ENCODE measurements at regions of chr13 and their contacts with region 1.

Region 1: GRCh38 chr13:60627071-60627686 is 230.2 kb downstream of the TDRD3 start:
- DNase-seq: peak; percentile 56
- ATAC-seq: peak; percentile 81
- H3K4me3 ChIP-seq: no peak overlapping the region
- H3K27ac ChIP-seq: no peak overlapping the region
- H3K4me1 ChIP-seq: no peaks in the 10 kb centered on the region
- H3K27me3 ChIP-seq: no peaks in the 10 kb centered on the region
- CTCF ChIP-seq: peak; percentile 71

Region 2: DNA sequence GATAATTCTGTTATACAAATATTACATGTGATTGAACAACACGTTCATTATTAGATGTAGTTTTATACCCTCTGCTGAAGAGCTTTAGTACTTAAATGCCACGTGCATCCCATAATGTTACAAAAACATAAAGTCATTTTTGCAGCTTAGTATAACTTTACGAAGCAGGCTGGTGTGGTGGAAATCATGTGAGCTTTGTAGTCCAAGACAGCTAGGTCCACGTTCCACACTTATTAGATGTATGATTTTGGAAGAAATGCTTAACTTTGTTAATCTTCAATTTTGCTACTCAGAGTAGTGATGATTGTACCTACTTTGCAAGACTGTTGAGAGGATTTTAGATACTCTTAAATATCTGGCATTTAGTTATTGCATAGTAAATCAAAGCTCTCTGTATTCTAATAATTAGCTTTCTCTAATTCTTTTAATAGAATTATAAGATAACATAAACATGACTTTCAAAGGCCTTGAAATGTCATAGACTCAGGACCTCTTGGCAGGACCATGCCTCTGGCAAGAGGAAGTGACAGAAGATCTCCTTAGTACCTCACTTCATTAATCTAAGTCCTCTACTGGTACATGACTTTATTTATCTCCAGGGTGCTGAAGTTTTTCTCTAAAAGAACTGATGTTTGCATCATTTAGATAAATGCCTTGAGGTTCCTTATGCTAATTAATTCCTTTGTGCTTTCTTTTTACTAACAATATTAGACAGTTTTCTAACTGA is 634.7 kb after region 1 on chr13:
- CTCF ChIA-PET with region 1: no interaction called
- POLR2A ChIA-PET with region 1: no interaction called
- intact Hi-C with region 1: loop called (anchors 10 kb)
- DNase-seq: no peak
- ATAC-seq: no peak
- H3K4me3 ChIP-seq: no peak overlapping the region
- H3K27ac ChIP-seq: no peak overlapping the region
- H3K4me1 ChIP-seq: no peaks in the 10 kb centered on the region
- H3K27me3 ChIP-seq: no peaks in the 10 kb centered on the region
- CTCF ChIP-seq: no peak

Region 3: GRCh38 chr13:61410669-61411297 is 783.6 kb after region 1 on chr13:
- CTCF ChIA-PET with region 1: no interaction called
- POLR2A ChIA-PET with region 1: no interaction called
- intact Hi-C with region 1: loop called (anchors 1 kb)
- DNase-seq: peak; percentile 48
- ATAC-seq: no peak
- H3K4me3 ChIP-seq: no peak overlapping the region
- H3K27ac ChIP-seq: no peak overlapping the region
- H3K4me1 ChIP-seq: no peaks in the 10 kb centered on the region
- H3K27me3 ChIP-seq: no peaks in the 10 kb centered on the region
- CTCF ChIP-seq: peak; percentile 49; the same call in 1 of the 2 replicates